Activated T-helper 1 cell treated with anti-CD3 and anti-CD28 coated beads, Interleukin-12 subunit alpha, Interleukin-12 subunit beta, Interleukin-2, Interleukin-4 antibody, amounts not matched to agents 30 ng/mL and 10 ng/mL and 1 ng/mL, durations not matched to agents 14 hours and 24 hours and 36 hours (primary cell): ENCODE measurements at regions of chr7 and their contacts with region 1.

Region 1: GRCh38 chr7:105808703-105809590 is 67.5 kb downstream of the ATXN7L1 start:
- DNase-seq: peak; percentile 77
- H3K4me3 Mint-ChIP-seq: peak overlapping the region; percentile 45
- H3K27ac Mint-ChIP-seq: peak overlapping the region; percentile 75
- H3K4me1 Mint-ChIP-seq: peaks cover 77% of the 10 kb centered on the region
- H3K27me3 Mint-ChIP-seq: peaks cover 1% of the 10 kb centered on the region

Region 2: DNA sequence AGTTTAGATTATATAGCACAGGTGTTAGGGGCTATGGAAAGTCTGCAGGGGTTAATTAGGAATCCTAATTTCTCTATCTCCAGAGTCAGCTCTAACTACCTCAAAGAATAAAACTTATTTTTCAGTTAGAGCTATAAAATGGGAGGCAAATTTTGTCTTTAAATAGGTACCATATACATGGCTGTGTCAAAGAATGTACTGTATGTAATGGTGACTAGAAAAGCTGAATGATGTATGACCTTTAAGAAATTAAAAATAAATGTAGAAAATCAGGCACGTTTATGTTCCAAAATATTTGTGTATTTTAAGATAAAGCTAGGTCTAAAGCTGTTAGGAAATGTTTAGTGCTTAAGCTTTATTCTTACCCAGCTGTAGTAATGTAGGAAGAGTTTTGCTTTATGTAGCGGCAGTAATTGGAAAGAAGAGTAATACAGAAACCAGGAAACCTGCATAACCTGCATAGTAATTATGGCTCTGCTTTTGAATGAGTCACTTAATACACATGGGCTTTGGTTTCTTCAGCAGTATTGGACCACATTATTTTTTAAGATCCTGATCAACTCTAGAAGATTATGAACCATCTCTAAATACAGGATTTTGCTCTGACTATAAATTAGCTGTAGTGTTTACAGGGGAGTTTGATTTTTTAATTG is 710.0 kb before region 1 on chr7:
- intact Hi-C with region 1: loop called (anchors 5 kb)
- DNase-seq: no peak
- H3K4me3 Mint-ChIP-seq: no peak overlapping the region
- H3K27ac Mint-ChIP-seq: peak overlapping the region; percentile 84
- H3K4me1 Mint-ChIP-seq: peaks cover 52% of the 10 kb centered on the region
- H3K27me3 Mint-ChIP-seq: no peaks in the 10 kb centered on the region

Region 3: GRCh38 chr7:105454095-105454747 is 354.7 kb before region 1 on chr7:
- intact Hi-C with region 1: no loop called
- DNase-seq: no peak
- H3K4me3 Mint-ChIP-seq: no peak overlapping the region
- H3K27ac Mint-ChIP-seq: no peak overlapping the region
- H3K4me1 Mint-ChIP-seq: peaks cover 12% of the 10 kb centered on the region
- H3K27me3 Mint-ChIP-seq: no peaks in the 10 kb centered on the region

Region 4: GRCh38 chr7:105766421-105767073 is 42.4 kb before region 1 on chr7:
- intact Hi-C with region 1: loop called (anchors 1 kb)
- DNase-seq: no peak
- H3K4me3 Mint-ChIP-seq: no peak overlapping the region
- H3K27ac Mint-ChIP-seq: no peak overlapping the region
- H3K4me1 Mint-ChIP-seq: peaks cover 24% of the 10 kb centered on the region
- H3K27me3 Mint-ChIP-seq: peaks cover 22% of the 10 kb centered on the region

Region 5: DNA sequence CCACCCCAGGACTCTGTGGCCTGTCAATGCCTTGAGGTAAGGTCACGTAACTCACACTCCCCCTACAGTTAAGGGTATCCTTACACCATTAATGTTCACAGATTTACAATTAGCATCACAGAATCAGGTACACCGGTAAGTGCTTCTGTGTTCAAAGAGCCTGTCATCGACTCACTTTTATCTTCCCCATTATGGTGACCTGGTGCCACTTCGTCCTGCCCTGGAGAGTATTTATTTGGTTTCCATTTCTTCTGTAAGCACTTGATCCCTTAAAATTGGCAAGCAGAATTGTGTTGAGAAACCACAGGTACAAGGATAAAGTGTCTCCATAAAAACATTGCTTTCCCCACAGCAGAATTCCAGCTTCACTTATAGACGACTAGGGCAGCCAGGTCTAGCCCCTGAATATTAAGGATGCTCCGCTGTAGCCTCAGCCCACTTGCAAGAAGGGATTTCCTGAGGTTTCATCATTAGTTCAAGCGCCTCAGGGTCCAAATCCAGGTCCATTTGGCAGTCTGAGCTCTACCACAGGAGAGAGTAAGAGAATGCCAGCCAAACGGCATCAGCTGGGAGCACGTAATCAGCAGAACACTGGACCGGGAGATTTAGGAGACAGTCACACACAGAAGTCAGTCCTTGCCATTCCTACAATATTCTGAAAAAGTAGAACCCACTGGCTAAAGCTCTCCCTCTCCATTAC is 57.3 kb after region 1 on chr7:
- intact Hi-C with region 1: no loop called
- DNase-seq: no peak
- H3K4me3 Mint-ChIP-seq: no peak overlapping the region
- H3K27ac Mint-ChIP-seq: no peak overlapping the region
- H3K4me1 Mint-ChIP-seq: no peaks in the 10 kb centered on the region
- H3K27me3 Mint-ChIP-seq: peaks cover 21% of the 10 kb centered on the region

Region 6: GRCh38 chr7:105924945-105925344 is 116.0 kb after region 1 on chr7:
- intact Hi-C with region 1: loop called (anchors 1 kb)
- DNase-seq: no peak
- H3K4me3 Mint-ChIP-seq: no peak overlapping the region
- H3K27ac Mint-ChIP-seq: peak overlapping the region; percentile 56
- H3K4me1 Mint-ChIP-seq: peaks cover 18% of the 10 kb centered on the region
- H3K27me3 Mint-ChIP-seq: peaks cover 12% of the 10 kb centered on the region

Region 7: DNA sequence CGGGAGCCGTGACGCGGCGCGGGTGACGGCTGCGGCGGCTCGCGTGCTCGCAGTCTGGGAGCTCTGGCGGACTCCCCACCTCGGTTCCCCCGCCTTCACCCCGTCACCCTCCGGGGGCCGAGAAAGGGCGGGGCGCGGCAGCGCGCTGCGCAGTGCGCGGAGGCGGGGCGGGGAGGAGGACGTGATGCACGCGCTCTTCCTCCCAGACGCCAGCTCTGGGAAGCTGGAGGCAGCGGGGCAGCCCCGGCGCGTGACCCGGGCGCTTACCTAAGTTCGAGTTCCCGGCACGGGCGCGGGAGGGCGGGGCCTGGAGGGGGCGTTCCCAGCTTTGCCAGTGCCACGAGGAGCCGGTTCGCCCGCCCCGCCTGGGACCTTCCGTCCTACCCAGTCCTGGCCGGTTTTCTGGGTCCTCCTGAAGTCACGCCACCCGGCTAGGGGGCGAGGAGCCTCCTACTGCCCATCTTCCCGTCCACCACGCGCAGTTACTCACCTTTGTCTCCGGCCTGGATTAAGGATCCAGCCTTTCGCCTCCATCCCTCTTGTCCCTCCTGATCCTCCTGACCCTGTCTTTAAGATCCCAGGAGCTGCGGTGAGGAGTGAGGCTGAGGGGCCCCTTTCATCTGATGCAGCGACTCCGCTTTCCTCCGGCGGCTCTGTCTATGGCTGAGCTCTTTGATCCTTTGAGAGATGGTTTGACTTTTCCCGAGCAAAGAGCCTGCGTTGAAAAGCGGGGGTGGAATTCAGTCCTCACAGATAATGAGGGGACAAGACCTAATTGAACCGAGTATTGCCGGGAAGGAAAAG is 476.3 kb after region 1 on chr7:
- intact Hi-C with region 1: loop called (anchors 1 kb)
- DNase-seq: peak; percentile 96
- H3K4me3 Mint-ChIP-seq: peak overlapping the region; percentile 95
- H3K27ac Mint-ChIP-seq: peak overlapping the region; percentile 99
- H3K4me1 Mint-ChIP-seq: peaks cover 53% of the 10 kb centered on the region
- H3K27me3 Mint-ChIP-seq: peaks cover 2% of the 10 kb centered on the region

Region 8: DNA sequence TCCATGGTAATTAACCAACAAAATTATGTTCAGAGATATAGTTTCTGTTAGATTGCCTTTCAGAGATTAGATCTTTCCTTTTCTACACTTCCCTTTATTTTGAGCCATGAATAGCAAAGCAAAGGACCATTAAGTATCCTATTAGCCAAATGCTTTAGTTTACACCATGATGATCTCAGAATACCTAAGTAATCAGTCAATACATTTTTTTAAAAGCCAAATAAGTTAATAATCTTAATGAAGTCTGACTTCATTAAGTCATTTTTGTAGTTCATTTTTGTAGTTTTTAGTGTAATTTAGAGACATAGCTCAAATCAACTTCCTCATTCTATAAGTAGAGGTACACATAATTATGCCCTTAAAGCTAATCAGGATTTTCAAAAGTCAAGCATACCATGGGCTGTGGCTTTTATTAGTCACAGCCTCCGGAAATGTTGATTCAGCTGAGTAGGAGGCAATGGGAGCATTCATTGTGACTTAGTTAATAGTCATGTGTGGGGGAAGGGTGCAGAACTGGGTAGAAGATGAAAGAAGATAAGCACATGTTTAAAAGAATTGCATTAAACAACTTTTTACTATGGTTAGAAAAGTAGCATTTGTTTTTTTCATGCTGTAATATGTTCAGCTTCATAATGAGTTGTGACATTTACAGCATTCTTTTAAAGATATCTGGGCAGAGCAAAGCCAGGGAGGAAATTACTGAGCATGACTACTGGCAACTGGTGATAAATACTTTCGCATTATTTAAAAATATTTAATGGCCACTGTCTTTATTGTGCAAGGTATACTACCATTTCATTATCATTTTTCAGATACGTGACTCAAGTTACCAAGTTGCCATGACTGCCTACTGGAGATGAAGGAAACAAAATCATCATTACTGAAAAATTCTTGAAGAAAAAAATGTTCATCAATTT is 909.3 kb after region 1 on chr7:
- intact Hi-C with region 1: loop called (anchors 2 kb)
- DNase-seq: peak; percentile 37
- H3K4me3 Mint-ChIP-seq: no peak overlapping the region
- H3K27ac Mint-ChIP-seq: no peak overlapping the region
- H3K4me1 Mint-ChIP-seq: peaks cover 11% of the 10 kb centered on the region
- H3K27me3 Mint-ChIP-seq: no peaks in the 10 kb centered on the region